ENCODE measurements at regions of chr7 and their contacts with region 1.

Region 1: GRCh38 chr7:106947244-106947728 is 82.2 kb downstream of the PIK3CG start:
- DNase-seq: peak; percentile 69
- H3K4me3 ChIP-seq: no peak overlapping the region
- H3K27ac ChIP-seq: no peak overlapping the region
- H3K27me3 ChIP-seq: peaks cover 5% of the 10 kb centered on the region
- CTCF ChIP-seq: peak; percentile 85

Region 2: DNA sequence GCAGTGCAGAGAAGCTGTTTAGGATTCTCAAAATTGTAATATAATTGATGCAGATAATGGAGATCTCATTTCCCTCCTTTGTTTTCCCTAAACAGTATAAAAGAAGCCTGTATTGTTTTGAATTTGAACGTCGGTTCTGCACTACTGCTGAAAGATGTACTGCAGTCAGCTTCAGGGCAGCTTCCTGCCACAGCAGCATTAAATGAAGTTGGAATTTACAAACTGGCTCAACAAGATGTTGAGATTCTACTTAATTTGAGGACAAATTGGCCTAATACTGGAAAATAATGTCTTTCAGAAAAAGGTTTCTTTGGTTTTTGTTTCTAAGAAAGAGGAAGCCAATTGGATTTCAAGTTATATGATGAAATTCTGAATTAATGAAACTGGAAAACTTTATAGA is 1380.3 kb before region 1 on chr7:
- CTCF ChIA-PET with region 1: no interaction called
- POLR2A ChIA-PET with region 1: no interaction called
- DNase-seq: no peak
- H3K4me3 ChIP-seq: no peak overlapping the region
- H3K27ac ChIP-seq: no peak overlapping the region
- H3K27me3 ChIP-seq: no peaks in the 10 kb centered on the region
- CTCF ChIP-seq: no peak

Region 3: GRCh38 chr7:106535234-106536026 is 411.9 kb before region 1 on chr7:
- CTCF ChIA-PET with region 1: no interaction called
- POLR2A ChIA-PET with region 1: no interaction called
- DNase-seq: no peak
- H3K4me3 ChIP-seq: no peak overlapping the region
- H3K27ac ChIP-seq: no peak overlapping the region
- H3K27me3 ChIP-seq: no peaks in the 10 kb centered on the region
- CTCF ChIP-seq: no peak

Region 4: GRCh38 chr7:107122486-107122911 is 175.2 kb after region 1 on chr7:
- CTCF ChIA-PET with region 1: interaction called, 11 read pairs
- POLR2A ChIA-PET with region 1: no interaction called
- DNase-seq: peak; percentile 64
- H3K4me3 ChIP-seq: no peak overlapping the region
- H3K27ac ChIP-seq: no peak overlapping the region
- H3K27me3 ChIP-seq: no peaks in the 10 kb centered on the region
- CTCF ChIP-seq: no peak

Measured in AG04450 (cell line).